Activated T-helper 1 cell treated with anti-CD3 and anti-CD28 coated beads, Interleukin-12 subunit alpha, Interleukin-12 subunit beta, Interleukin-2, Interleukin-4 antibody, amounts not matched to agents 30 ng/mL and 10 ng/mL and 1 ng/mL, durations not matched to agents 14 hours and 24 hours and 36 hours (primary cell): ENCODE measurements at regions of chr12 and their contacts with region 1.

Region 1: DNA sequence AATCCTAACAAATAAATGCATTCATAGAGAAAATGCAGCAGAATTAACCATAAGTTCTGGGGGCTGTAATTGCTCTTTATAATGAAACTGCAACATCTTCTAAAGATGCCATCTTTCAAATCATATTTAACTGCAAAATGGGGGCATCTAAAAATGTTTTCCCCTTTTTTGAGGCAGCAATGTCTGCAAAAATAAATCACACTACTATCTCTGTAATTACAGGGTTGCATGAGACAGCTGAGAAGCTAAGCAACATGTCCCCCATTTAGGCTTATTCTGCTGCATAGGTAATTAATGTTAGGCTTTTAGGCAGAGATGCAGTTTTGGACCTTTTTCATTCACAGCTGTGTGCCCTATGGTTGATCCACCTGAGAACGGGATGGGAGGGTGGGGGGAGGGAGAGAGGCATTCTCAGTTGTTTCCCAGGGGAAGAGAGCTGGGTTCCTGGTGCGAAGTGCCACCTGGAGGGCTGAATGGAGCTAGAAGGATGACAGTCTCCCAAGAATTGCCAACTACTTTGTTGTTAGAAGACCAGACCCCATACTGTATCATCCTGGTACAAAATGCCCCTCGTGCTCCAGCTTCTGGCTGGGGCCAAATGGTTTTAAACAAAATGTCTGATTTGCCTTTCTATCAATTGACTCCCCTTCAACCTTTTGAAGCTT is 154.2 kb downstream of the APAF1 start:
- DNase-seq: no peak
- H3K4me3 Mint-ChIP-seq: no peak overlapping the region
- H3K27ac Mint-ChIP-seq: no peak overlapping the region
- H3K4me1 Mint-ChIP-seq: no peaks in the 10 kb centered on the region
- H3K27me3 Mint-ChIP-seq: peaks cover 23% of the 10 kb centered on the region

Region 2: GRCh38 chr12:98439981-98440581 is 359.2 kb before region 1 on chr12:
- intact Hi-C with region 1: no loop called
- DNase-seq: no peak
- H3K4me3 Mint-ChIP-seq: no peak overlapping the region
- H3K27ac Mint-ChIP-seq: peak overlapping the region; percentile 19
- H3K4me1 Mint-ChIP-seq: peaks cover 9% of the 10 kb centered on the region
- H3K27me3 Mint-ChIP-seq: peaks cover 29% of the 10 kb centered on the region

Region 3: DNA sequence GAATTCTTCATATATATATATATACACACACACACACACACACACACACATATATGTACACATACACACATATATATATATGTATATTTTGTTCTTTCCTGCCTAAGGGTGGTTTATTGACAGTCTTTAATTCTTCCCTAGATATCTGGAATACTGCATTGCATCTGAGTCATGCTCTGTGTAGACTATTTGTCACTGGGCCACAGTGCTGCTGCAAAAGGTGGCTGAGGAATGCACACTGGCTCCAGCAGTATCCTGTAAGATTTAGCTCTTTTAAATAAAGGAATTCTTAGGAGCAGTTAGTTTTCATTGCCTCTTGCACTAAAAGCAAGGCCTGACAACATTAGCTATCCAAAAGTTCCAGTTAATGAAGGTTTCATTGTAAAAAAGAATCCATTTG is 46.7 kb after region 1 on chr12:
- intact Hi-C with region 1: loop called (anchors 2 kb)
- DNase-seq: no peak
- H3K4me3 Mint-ChIP-seq: no peak overlapping the region
- H3K27ac Mint-ChIP-seq: no peak overlapping the region
- H3K4me1 Mint-ChIP-seq: peaks cover 5% of the 10 kb centered on the region
- H3K27me3 Mint-ChIP-seq: peaks cover 3% of the 10 kb centered on the region